Mammary epithelial cell (primary cell): ENCODE measurements at regions of chr4 and their contacts with region 1.

Region 1: DNA sequence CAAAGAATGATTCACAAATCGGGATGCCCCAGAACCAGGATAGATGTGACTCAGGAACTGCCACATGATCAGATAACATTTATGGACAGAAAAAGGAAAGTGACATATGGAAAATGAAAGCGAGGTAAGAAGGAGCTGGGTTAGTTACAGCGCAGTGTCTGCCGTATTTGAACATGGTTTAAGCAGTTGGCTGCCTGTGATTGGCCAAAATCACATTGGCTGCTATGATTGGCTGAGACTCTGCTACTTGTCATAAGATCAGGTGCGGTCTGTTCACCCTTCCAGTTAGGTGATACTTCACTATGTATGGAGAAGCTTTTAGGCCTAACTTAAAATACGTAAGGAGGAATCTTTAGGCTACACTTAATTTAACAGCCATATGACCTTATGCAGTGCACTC is 322.7 kb upstream of the HAND2 start:
- DNase-seq: no peak
- H3K4me3 ChIP-seq: no peak overlapping the region
- H3K27ac ChIP-seq: no peak overlapping the region
- H3K4me1 ChIP-seq: no peaks in the 10 kb centered on the region
- H3K27me3 ChIP-seq: no peaks in the 10 kb centered on the region
- CTCF ChIP-seq: no peak

Region 2: GRCh38 chr4:173871643-173872042 is 18.9 kb after region 1 on chr4:
- CTCF ChIA-PET with region 1: no interaction called
- dilution Hi-C with region 1: no loop called
- in situ Hi-C with region 1: no loop called
- intact Hi-C with region 1: loop called (anchors 1 kb)
- DNase-seq: no peak
- H3K4me3 ChIP-seq: no peak overlapping the region
- H3K27ac ChIP-seq: no peak overlapping the region
- H3K4me1 ChIP-seq: no peaks in the 10 kb centered on the region
- H3K27me3 ChIP-seq: no peaks in the 10 kb centered on the region
- CTCF ChIP-seq: no peak